Activated CD4-positive, alpha-beta T cell treated with anti-CD3 and anti-CD28 coated beads for 36 hours (primary cell): ENCODE measurements at regions of chrX and their contacts with region 1.

Region 1: GRCh38 chrX:40735325-40736169 is at the start of gene MED14:
- DNase-seq: peak; percentile 95
- ATAC-seq: peak; percentile 93
- H3K4me3 Mint-ChIP-seq: peak within 1 kb of the TSS; percentile 84
- H3K27ac Mint-ChIP-seq: peak within 1 kb of the TSS; percentile 96
- H3K4me1 Mint-ChIP-seq: peaks cover 43% of the 10 kb centered on the region
- H3K27me3 Mint-ChIP-seq: no peaks in the 10 kb centered on the region
- total RNA-seq, gene MED14: 51.0 to 60.1 TPM

Region 2: GRCh38 chrX:40108959-40109287 is 626.6 kb before region 1 on chrX:
- CTCF ChIA-PET with region 1: no interaction called
- POLR2A ChIA-PET with region 1: no interaction called
- intact Hi-C with region 1: loop called in 1 of 2 experiments (anchors 10 kb)
- DNase-seq: peak; percentile 83
- ATAC-seq: peak; percentile 60
- H3K4me3 Mint-ChIP-seq: peak overlapping the region; percentile 46
- H3K27ac Mint-ChIP-seq: no peak overlapping the region
- H3K4me1 Mint-ChIP-seq: peaks cover 9% of the 10 kb centered on the region
- H3K27me3 Mint-ChIP-seq: peaks cover 4% of the 10 kb centered on the region

Region 3: GRCh38 chrX:40580537-40581335 is 154.8 kb before region 1 on chrX and contains the start of gene ATP6AP2:
- CTCF ChIA-PET with region 1: no interaction called
- POLR2A ChIA-PET with region 1: no interaction called
- intact Hi-C with region 1: loop called in 1 of 2 experiments (anchors 1 kb)
- DNase-seq: peak; percentile 94
- ATAC-seq: peak; percentile 98
- H3K4me3 Mint-ChIP-seq: peak within 1 kb of the TSS; percentile 77
- H3K27ac Mint-ChIP-seq: peak within 1 kb of the TSS; percentile 86
- H3K4me1 Mint-ChIP-seq: peaks cover 29% of the 10 kb centered on the region
- H3K27me3 Mint-ChIP-seq: no peaks in the 10 kb centered on the region
- total RNA-seq, gene ATP6AP2: 39.9 to 52.2 TPM

Region 4: GRCh38 chrX:40685362-40685918 is 50.1 kb before region 1 on chrX:
- CTCF ChIA-PET with region 1: no interaction called
- POLR2A ChIA-PET with region 1: no interaction called
- intact Hi-C with region 1: loop called in 1 of 2 experiments (anchors 10 kb)
- DNase-seq: peak; percentile 4
- ATAC-seq: peak; percentile 42
- H3K4me3 Mint-ChIP-seq: no peak overlapping the region
- H3K27ac Mint-ChIP-seq: peak overlapping the region; percentile 60
- H3K4me1 Mint-ChIP-seq: peaks cover 26% of the 10 kb centered on the region
- H3K27me3 Mint-ChIP-seq: no peaks in the 10 kb centered on the region

Region 5: DNA sequence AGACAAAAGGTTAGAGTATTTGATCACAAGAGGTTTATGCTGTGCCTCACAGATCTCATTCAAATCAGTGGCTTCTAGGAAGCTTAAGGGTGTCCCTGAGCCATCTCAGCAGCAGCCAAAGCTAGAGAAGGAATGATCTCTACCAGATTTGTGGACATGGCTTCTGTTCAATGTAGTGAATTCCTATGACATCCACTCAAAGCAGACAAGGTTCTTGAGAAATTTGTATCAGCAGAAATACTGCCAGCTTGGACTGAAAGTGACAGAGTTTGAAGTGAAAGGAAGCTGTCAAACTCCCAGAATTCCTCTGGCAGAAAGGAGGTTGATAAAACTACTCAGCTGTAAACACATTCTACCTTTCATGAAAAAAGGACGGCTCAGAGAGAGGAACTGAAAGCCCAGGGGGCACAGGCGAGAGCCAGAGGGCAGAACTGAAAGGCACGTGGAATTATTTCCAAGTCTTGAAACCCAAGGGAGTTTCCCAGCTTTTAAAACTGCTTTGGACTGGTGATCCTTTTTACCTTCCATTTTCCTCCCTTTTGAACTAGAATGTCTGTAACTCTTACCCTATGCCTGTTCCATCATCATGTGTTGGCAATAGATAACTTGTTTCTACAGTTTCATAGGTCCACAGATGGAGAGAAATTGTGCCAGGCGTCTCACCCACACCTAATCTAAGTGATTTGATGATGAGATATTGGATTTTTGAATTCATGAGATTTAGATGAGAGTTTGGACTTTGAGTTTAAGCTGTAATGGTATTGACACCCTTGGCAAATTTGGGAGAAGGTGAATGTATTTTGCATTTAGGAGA is 14.3 kb after region 1 on chrX:
- CTCF ChIA-PET with region 1: interaction called, 10 read pairs
- POLR2A ChIA-PET with region 1: no interaction called
- intact Hi-C with region 1: no loop called
- DNase-seq: no peak
- ATAC-seq: peak; percentile 33
- H3K4me3 Mint-ChIP-seq: no peak overlapping the region
- H3K27ac Mint-ChIP-seq: peak overlapping the region; percentile 16
- H3K4me1 Mint-ChIP-seq: peaks cover 15% of the 10 kb centered on the region
- H3K27me3 Mint-ChIP-seq: no peaks in the 10 kb centered on the region

Region 6: DNA sequence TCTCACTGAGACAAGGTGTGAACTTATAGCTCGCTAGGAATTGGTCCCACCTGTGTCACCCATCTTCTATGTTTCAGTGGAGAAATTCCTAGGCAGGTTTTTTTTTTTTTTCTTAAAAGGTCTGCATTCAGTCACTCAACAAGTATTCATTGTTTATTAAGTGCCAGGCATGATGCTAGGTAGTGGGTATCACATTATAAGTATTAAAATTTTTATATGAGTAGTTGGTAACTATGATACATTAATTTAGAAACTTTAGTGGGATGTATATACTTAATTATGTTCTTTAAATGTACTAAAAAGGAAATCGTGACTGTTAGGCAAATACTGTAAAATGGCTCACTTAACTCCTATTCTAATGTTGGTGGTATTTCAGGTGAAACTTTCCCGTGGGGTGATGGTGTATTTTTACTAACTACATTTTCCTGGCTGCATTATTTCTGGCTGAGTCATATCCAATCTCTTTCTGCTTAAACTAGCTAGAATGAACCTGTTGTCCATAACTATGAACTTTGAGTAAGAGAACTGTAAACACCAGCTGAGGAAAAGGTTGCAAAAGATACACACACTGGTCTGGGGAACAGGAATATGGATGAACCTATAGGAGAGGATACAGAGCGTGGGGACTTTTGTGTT is 49.1 kb after region 1 on chrX:
- CTCF ChIA-PET with region 1: no interaction called
- POLR2A ChIA-PET with region 1: no interaction called
- intact Hi-C with region 1: loop called in 1 of 2 experiments (anchors 10 kb)
- DNase-seq: no peak
- ATAC-seq: peak; percentile 70
- H3K4me3 Mint-ChIP-seq: no peak overlapping the region
- H3K27ac Mint-ChIP-seq: peak overlapping the region; percentile 65
- H3K4me1 Mint-ChIP-seq: peaks cover 8% of the 10 kb centered on the region
- H3K27me3 Mint-ChIP-seq: no peaks in the 10 kb centered on the region